CD14-positive monocyte (primary cell): ENCODE measurements at regions of chr7 and their contacts with region 1.

Region 1: GRCh38 chr7:158856883-158857668 is 718 bp downstream of the DYNC2I1 start:
- DNase-seq: no peak
- H3K4me3 ChIP-seq: peak overlapping the region; percentile 56 to 89 (median 67)
- H3K4me3 Mint-ChIP-seq: peak overlapping the region; percentile 96 to 99
- H3K27ac ChIP-seq: peak overlapping the region in 1 of 2 donors; percentile 65
- H3K27ac Mint-ChIP-seq: no peak overlapping the region
- H3K4me1 ChIP-seq: peaks cover 2 to 14% of the 10 kb centered on the region in 2 donors
- H3K4me1 Mint-ChIP-seq: peaks cover 3% of the 10 kb centered on the region
- H3K27me3 ChIP-seq: no peaks in the 10 kb centered on the region
- H3K27me3 Mint-ChIP-seq: peaks cover 1 to 7% (median 3%) of the 10 kb centered on the region in 3 donors
- CTCF ChIP-seq: no peak

Region 2: GRCh38 chr7:158704704-158705468 is 152.2 kb before region 1 on chr7 and contains the start of gene NCAPG2:
- intact Hi-C with region 1: loop called in 1 of 2 experiments (anchors 10 kb)
- DNase-seq: peak; percentile 99 to 100 (median 99)
- H3K4me3 ChIP-seq: peak within 1 kb of the TSS; percentile 87 to 96 (median 95)
- H3K4me3 Mint-ChIP-seq: peak within 1 kb of the TSS; percentile 74 to 84
- H3K27ac ChIP-seq: peak within 1 kb of the TSS; percentile 88 to 95
- H3K27ac Mint-ChIP-seq: peak within 1 kb of the TSS; percentile 74 to 92 (median 90)
- H3K4me1 ChIP-seq: peaks cover 35 to 50% of the 10 kb centered on the region in 2 donors
- H3K4me1 Mint-ChIP-seq: peaks cover 35% of the 10 kb centered on the region
- H3K27me3 ChIP-seq: no peaks in the 10 kb centered on the region
- H3K27me3 Mint-ChIP-seq: no peaks in the 10 kb centered on the region
- CTCF ChIP-seq: peak; percentile 23
- polyA plus RNA-seq, gene NCAPG2: 1.1 to 3.1 (median 1.7) TPM

Region 3: DNA sequence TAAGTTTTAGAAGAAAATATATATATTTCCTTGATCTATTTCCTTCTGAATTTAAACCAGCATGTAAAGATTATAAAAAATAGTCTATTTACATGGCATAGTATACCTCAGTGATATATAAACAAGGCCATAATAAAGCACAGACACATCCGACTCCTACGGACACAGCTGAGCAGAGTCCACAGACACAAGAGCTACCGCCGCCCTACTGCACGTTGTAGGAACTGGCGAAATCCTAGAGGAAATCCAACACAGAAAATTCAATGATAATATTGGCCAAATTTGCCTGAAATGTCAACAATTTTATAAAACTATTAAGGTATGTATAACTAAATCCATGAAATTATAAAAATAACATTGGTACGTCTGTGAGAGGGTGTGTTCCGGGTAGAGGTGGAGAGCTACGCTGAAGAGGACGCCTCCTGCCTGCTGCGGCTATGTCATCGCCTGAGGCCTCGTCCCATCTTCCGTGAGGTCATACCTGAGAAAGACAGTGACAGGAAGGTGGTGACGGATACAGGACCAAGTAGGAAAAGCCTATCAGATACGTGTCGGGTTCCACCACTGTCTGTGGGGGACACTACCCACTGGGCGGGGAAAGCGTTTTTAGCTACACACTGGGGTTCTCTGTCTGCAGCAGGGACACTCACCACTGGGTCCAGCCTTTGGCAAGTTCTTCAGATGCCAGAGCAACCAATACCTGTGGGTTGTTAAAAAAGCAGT is 123.1 kb before region 1 on chr7:
- intact Hi-C with region 1: no loop called
- DNase-seq: no peak
- H3K4me3 ChIP-seq: no peak overlapping the region
- H3K4me3 Mint-ChIP-seq: no peak overlapping the region
- H3K27ac ChIP-seq: peak overlapping the region in 1 of 2 donors; percentile 47
- H3K27ac Mint-ChIP-seq: peak overlapping the region in 4 of 7 donors; percentile 60 to 74 (median 66)
- H3K4me1 ChIP-seq: peaks cover 15 to 21% of the 10 kb centered on the region in 2 donors
- H3K4me1 Mint-ChIP-seq: peaks cover 23% of the 10 kb centered on the region
- H3K27me3 ChIP-seq: no peaks in the 10 kb centered on the region
- H3K27me3 Mint-ChIP-seq: peaks cover 0 to 1% (median 0%) of the 10 kb centered on the region in 3 donors
- CTCF ChIP-seq: no peak

Region 4: DNA sequence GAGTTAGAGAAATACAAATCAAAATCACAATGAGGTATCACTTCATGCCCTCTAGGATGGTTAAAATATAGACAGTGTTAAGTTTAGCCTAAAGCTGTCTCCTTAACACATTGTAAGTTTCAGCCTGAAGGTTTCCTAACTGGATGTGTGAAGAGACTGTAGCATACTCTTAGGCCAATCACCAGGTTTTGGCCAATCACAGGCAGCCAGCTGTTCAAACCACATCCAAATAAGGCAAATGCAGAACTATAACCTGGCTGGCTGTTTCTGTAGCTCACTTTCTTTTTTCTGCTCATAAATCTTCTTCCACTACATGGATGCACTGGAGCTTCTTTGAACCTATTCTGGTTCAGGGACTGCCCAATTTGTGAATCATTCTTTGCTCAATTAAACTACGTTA is 47.5 kb before region 1 on chr7:
- intact Hi-C with region 1: loop called in 1 of 2 experiments (anchors 10 kb)
- DNase-seq: peak; percentile 77 to 79 (median 78)
- H3K4me3 ChIP-seq: no peak overlapping the region
- H3K4me3 Mint-ChIP-seq: peak overlapping the region in 1 of 2 donors; percentile 48
- H3K27ac ChIP-seq: peak overlapping the region in 1 of 2 donors; percentile 72
- H3K27ac Mint-ChIP-seq: peak overlapping the region; percentile 82 to 91 (median 88)
- H3K4me1 ChIP-seq: peaks cover 29 to 36% of the 10 kb centered on the region in 2 donors
- H3K4me1 Mint-ChIP-seq: peaks cover 42% of the 10 kb centered on the region
- H3K27me3 ChIP-seq: no peaks in the 10 kb centered on the region
- H3K27me3 Mint-ChIP-seq: no peaks in the 10 kb centered on the region
- CTCF ChIP-seq: no peak